ENCODE measurements at regions of chr15 and their contacts with region 1.

Region 1: DNA sequence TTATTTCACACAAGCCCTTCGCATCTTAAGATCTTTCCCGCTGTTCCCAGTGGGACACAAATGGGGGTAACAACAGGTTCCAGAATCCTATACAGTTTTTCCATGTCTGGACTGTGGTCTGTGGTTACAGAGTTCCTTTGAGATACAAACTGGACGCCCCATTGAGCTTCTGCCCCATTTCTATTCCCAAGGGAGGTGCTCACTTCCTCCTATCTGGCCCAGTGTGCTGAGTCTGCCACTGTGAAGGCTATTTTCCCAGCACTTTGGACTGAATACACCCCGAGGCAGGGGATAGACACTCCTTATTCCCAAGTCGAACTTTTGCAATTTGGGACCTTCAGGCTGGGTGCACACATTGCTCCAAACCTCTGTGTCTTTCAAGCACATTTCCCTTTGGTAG is 44.0 kb downstream of the MESD start:
- DNase-seq: no peak
- H3K4me3 ChIP-seq: no peak overlapping the region
- H3K27ac ChIP-seq: no peak overlapping the region
- H3K4me1 ChIP-seq: no peaks in the 10 kb centered on the region
- H3K27me3 ChIP-seq: no peaks in the 10 kb centered on the region
- CTCF ChIP-seq: no peak

Region 2: DNA sequence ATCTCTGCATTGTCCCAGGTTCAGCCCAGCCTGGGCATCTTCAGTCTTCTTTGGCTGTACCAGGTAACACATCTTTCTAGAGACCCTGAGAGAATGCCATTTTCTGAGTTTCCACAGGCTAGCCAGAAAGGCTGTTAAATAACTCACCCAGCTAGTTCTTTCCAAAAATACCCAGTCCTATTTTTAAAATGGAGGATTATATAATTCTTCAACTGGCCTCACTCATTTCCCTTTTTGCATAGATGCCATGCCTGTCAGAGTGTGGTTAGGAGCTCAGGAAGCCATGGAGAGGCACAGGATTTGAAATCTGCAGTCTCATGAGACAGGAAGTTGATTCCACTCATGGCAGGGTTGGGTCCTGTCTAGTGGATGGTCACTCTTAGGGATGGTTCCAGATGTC is 126.6 kb before region 1 on chr15:
- CTCF ChIA-PET with region 1: no interaction called
- POLR2A ChIA-PET with region 1: no interaction called
- intact Hi-C with region 1: no loop called
- DNase-seq: no peak
- H3K4me3 ChIP-seq: no peak overlapping the region
- H3K27ac ChIP-seq: no peak overlapping the region
- H3K4me1 ChIP-seq: no peaks in the 10 kb centered on the region
- H3K27me3 ChIP-seq: peaks cover 15% of the 10 kb centered on the region
- CTCF ChIP-seq: no peak

Region 3: DNA sequence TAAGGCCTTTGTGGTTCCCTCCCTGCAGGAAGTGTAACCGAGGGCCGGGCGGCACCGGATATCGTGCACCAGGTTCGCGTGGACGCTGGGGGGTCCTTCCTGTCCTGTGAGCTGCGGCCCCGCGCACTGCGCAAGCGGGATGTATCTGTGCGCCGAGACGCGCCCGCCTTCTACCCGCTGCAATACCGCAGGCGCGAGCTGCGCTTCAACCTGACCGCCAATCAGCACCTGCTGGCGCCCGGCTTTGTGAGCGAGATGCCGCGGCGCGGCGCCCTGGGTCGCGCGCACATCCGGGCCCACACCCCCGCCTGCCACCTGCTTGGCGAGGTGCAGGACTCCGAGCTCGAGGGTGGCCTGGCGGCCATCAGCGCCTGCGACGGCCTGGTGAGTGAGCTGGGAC is 1352.9 kb after region 1 on chr15:
- CTCF ChIA-PET with region 1: no interaction called
- POLR2A ChIA-PET with region 1: interaction called, 10 read pairs
- intact Hi-C with region 1: no loop called
- DNase-seq: no peak
- H3K4me3 ChIP-seq: no peak overlapping the region
- H3K27ac ChIP-seq: no peak overlapping the region
- H3K4me1 ChIP-seq: no peaks in the 10 kb centered on the region
- H3K27me3 ChIP-seq: no peaks in the 10 kb centered on the region
- CTCF ChIP-seq: no peak